ENCODE measurements at regions of chr21 and their contacts with region 1.

Region 1: GRCh38 chr21:32569261-32570230 is 15.8 kb downstream of the TCP10L start:
- DNase-seq: peak; percentile 93
- ATAC-seq: peak; percentile 95
- H3K4me3 Mint-ChIP-seq: peak overlapping the region; percentile 86
- H3K27ac Mint-ChIP-seq: peak overlapping the region; percentile 79
- H3K4me1 Mint-ChIP-seq: peaks cover 20% of the 10 kb centered on the region
- H3K27me3 Mint-ChIP-seq: no peaks in the 10 kb centered on the region
- CTCF ChIP-seq: peak; percentile 90

Region 2: GRCh38 chr21:32403201-32403777 is 166.3 kb before region 1 on chr21:
- CTCF ChIA-PET with region 1: interaction called, 56 read pairs
- POLR2A ChIA-PET with region 1: no interaction called
- intact Hi-C with region 1: no loop called
- DNase-seq: peak; percentile 78
- ATAC-seq: peak; percentile 92
- H3K4me3 Mint-ChIP-seq: no peak overlapping the region
- H3K27ac Mint-ChIP-seq: no peak overlapping the region
- H3K4me1 Mint-ChIP-seq: peaks cover 3% of the 10 kb centered on the region
- H3K27me3 Mint-ChIP-seq: peaks cover 5% of the 10 kb centered on the region
- CTCF ChIP-seq: peak; percentile 83

Region 3: DNA sequence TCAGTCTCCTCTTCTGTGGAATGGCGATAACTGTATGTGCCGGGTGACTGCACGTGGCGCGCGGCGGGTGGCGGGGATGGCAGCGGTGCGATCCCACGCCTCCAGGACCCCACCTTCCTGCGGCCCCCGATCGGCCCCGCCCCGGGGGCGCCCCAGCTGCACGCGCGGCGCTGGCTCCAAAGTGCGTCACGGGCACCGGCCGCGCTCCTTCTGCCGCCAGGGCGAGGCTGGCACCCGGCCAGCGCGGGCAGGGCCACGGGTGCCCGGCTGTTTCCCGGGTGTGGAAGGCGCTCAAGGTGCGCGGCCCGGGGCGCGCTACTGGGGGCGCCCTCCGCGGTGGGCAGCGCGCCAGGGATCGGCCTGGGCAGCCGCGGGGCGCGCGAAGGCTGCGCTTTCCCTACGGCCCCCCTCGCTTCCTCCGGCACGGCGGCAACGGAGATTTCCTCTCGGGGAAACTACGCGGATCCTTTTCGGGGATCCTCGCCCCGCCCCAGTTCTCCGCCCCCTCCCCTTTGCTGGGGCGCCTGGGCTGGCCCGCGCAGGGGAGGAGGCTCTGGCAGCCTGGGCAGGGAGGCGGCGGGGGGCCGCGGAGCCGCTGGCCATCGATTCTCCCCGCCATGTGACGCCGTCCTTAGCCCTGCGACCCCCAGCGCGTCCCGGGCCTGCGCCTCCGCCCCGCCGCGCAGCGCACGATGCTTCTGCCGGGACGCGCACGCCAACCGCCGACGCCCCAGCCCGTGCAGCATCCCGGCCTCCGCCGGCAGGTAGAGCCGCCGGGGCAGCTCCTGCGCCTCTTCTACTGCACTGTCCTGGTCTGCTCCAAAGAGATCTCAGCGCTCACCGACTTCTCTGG is 157.2 kb before region 1 on chr21 and contains the start of gene EVA1C:
- CTCF ChIA-PET with region 1: interaction called, 56 read pairs
- POLR2A ChIA-PET with region 1: interaction called, 3 read pairs
- intact Hi-C with region 1: loop called (anchors 5 kb)
- DNase-seq: peak; percentile 70
- ATAC-seq: peak; percentile 61
- H3K4me3 Mint-ChIP-seq: peak within 1 kb of the TSS; percentile 94
- H3K27ac Mint-ChIP-seq: peak within 1 kb of the TSS; percentile 96
- H3K4me1 Mint-ChIP-seq: peaks cover 37% of the 10 kb centered on the region
- H3K27me3 Mint-ChIP-seq: no peaks in the 10 kb centered on the region
- CTCF ChIP-seq: peak; percentile 30
- total RNA-seq, gene EVA1C: 11.1 to 13.7 TPM

Region 4: DNA sequence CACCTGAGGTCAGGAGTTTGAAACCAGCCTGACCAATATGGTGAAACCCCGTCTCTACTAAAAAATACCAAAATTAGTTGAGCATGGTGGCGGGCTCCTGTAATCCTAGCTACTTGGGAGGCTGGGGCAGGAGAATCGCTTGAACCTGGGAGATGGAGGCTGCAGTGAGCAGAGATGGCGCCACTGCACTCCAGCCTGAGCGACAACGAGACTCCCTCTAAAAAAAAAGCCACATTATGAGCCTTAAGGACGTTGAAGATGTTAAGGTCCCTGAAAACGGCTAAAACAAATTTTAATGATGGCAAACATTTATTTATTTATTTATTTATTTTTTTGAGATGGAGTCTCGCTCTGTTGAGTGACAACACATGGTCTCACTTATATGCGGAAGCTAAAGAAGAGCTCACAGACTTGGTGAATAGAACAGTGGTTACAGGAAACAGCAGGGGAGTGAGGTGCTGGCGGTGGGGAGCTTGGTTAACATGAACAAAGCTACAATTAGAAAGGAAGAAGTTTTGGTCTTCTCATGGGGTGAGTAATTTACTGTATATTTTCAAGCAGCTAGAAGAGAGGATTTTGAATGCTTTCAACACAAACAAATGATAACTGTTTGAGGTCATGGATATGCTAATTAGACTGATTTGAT is 31.3 kb before region 1 on chr21:
- CTCF ChIA-PET with region 1: interaction called, 12 read pairs
- POLR2A ChIA-PET with region 1: no interaction called
- intact Hi-C with region 1: no loop called
- DNase-seq: peak; percentile 75
- ATAC-seq: peak; percentile 95
- H3K4me3 Mint-ChIP-seq: peak overlapping the region; percentile 20
- H3K27ac Mint-ChIP-seq: peak overlapping the region; percentile 83
- H3K4me1 Mint-ChIP-seq: peaks cover 26% of the 10 kb centered on the region
- H3K27me3 Mint-ChIP-seq: no peaks in the 10 kb centered on the region
- CTCF ChIP-seq: no peak